Left colon (tissue), 2 donors: ENCODE measurements at regions of chr12 and their contacts with region 1.

Region 1: GRCh38 chr12:124044809-124045321 is 71.8 kb downstream of the ZNF664 start:
- DNase-seq: no peak
- ATAC-seq: no peak

Region 2: GRCh38 chr12:124174451-124175348 is 129.8 kb after region 1 on chr12:
- intact Hi-C with region 1: no loop called
- DNase-seq: no peak
- ATAC-seq: no peak

Region 3: GRCh38 chr12:124302807-124303578 is 258.1 kb after region 1 on chr12:
- intact Hi-C with region 1: loop called in 1 of 2 experiments (anchors 10 kb)
- DNase-seq: peak in 1 of 2 donors; percentile 7
- ATAC-seq: peak; percentile 13